Dendritic cell treated with granulocyte-macrophage colony-stimulating factor and Interleukin-4, amounts not matched to agents 40 ng/mL and 50 ng/mL, for 4 days (primary cell): ENCODE measurements at regions of chr10 and their contacts with region 1.

Region 1: DNA sequence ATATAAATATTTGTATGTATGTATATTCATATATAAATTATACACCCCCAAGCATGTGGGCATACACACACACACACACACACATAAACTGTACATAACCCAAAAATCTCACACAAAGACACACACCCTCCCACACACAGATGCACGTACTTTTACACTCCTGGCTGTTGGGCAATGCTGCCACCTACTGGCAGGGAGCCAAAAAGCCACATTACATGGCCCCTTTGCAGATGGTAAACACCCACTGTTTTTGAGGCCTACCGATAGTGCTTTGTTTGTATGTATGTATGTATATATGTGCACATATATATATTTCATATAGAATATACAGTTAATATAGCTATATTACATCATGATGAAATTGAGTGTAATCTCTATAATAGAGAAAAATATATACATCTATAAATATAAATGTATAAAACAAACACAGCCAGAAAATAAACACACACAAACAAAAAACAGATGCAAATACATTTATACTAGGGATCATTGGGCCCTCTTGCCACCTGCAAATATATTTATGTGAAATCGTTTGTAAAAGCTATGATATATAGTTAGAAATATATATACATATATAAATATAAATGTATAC is 120.1 kb upstream of the ACBD5 start:
- H3K4me3 Mint-ChIP-seq: no peak overlapping the region
- H3K27ac Mint-ChIP-seq: no peak overlapping the region
- H3K4me1 Mint-ChIP-seq: peaks cover 7% of the 10 kb centered on the region
- H3K27me3 Mint-ChIP-seq: no peaks in the 10 kb centered on the region

Region 2: DNA sequence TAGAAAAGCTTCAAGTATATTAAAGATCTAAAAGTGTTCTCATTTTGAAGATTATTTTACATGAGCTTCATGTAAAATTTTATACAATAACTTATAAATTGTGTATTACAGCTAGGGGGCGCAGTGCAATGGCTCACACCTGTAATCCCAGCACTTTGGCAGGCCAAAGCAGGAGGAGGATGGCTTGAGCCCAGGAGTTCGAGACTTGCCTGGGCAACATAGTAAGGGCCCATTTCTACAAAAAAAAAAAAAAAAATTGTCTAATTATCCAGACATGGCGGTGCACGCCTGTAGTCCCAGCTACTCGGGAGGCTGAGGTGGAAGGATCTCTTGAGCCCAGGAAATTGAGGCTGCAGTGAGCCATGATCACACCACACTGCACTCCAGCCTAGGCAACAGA is 136.7 kb before region 1 on chr10:
- intact Hi-C with region 1: loop called (anchors 1 kb)
- H3K4me3 Mint-ChIP-seq: no peak overlapping the region
- H3K27ac Mint-ChIP-seq: no peak overlapping the region
- H3K4me1 Mint-ChIP-seq: no peaks in the 10 kb centered on the region
- H3K27me3 Mint-ChIP-seq: no peaks in the 10 kb centered on the region

Region 3: GRCh38 chr10:27413831-27414348 is 53.2 kb after region 1 on chr10:
- intact Hi-C with region 1: no loop called
- H3K4me3 Mint-ChIP-seq: peak overlapping the region; percentile 39
- H3K27ac Mint-ChIP-seq: no peak overlapping the region
- H3K4me1 Mint-ChIP-seq: no peaks in the 10 kb centered on the region
- H3K27me3 Mint-ChIP-seq: peaks cover 17% of the 10 kb centered on the region